Testis (tissue), 5 donors: ENCODE measurements at regions of chr16 and their contacts with region 1.

Region 1: DNA sequence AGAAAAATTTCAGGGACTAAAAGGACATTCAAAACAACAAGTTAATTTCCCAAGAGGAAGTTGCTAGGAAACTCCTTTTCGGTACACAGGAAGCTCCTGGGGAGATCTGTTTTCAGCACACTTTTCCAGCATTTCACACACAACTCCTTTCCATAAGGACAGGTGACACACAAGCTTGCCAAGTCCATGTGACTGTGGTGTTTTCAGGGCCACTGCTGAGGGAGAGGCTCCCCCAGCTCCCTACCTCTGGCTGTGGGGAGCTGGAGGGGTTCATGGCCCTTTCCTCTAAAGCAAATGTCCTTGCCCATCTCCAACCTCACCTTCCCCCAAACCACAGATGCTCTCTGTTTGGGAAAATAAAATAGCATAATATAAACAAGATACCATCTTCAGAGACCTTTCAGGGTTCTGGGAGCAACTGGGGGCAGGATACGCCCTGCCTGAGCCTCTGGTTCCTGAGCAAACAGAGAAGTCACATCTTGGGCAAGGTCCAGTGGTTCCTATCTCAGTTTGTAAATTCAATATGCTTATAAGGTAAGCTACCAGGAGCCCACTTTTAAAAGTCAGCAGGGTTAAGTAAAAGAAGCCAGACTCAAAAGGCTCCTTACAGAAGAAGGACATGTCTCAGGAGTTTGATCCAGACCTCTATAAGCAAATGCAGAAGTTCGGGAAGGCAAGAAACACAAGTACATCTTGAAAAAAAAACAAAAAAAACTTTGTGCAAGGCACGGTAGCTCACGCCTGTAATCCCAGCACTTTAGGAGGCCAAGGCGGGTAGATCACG is 3.0 kb downstream of the PDZD9 start:
- DNase-seq: no peak
- H3K4me3 ChIP-seq: no peak overlapping the region
- H3K27ac ChIP-seq: no peak overlapping the region
- H3K4me1 ChIP-seq: peaks cover 12% of the 10 kb centered on the region
- H3K27me3 ChIP-seq: no peaks in the 10 kb centered on the region
- CTCF ChIP-seq: no peak
- POLR2A ChIP-seq: no peak

Region 2: GRCh38 chr16:22077700-22078313 is 79.9 kb after region 1 on chr16:
- intact Hi-C with region 1: loop called (anchors 10 kb)
- DNase-seq: peak; percentile 78
- H3K4me3 ChIP-seq: no peak overlapping the region
- H3K27ac ChIP-seq: no peak overlapping the region
- H3K4me1 ChIP-seq: peaks cover 16% of the 10 kb centered on the region
- H3K27me3 ChIP-seq: no peaks in the 10 kb centered on the region
- CTCF ChIP-seq: peak; percentile 66 to 87 (median 68)
- POLR2A ChIP-seq: no peak

Region 3: GRCh38 chr16:22091758-22092600 is 94.1 kb after region 1 on chr16 and contains the start of gene VWA3A:
- intact Hi-C with region 1: no loop called
- DNase-seq: no peak
- H3K4me3 ChIP-seq: no peak within 1 kb of the TSS
- H3K27ac ChIP-seq: no peak within 1 kb of the TSS
- H3K4me1 ChIP-seq: no peaks in the 10 kb centered on the region
- H3K27me3 ChIP-seq: no peaks in the 10 kb centered on the region
- CTCF ChIP-seq: no peak
- POLR2A ChIP-seq: no peak
- total RNA-seq, gene VWA3A: 5.0 to 9.8 TPM

Region 4: GRCh38 chr16:22139008-22139407 is 141.1 kb after region 1 on chr16:
- intact Hi-C with region 1: no loop called
- DNase-seq: no peak
- H3K4me3 ChIP-seq: no peak overlapping the region
- H3K27ac ChIP-seq: no peak overlapping the region
- H3K4me1 ChIP-seq: no peaks in the 10 kb centered on the region
- H3K27me3 ChIP-seq: no peaks in the 10 kb centered on the region
- CTCF ChIP-seq: no peak
- POLR2A ChIP-seq: no peak